Prostate gland (tissue), 2 donors: ENCODE measurements at regions of chr18 and their contacts with region 1.

Region 1: GRCh38 chr18:7566567-7567473 is at the start of gene PTPRM:
- DNase-seq: peak; percentile 80
- H3K4me3 ChIP-seq: peak within 1 kb of the TSS; percentile 79 to 82
- H3K27ac ChIP-seq: peak within 1 kb of the TSS; percentile 90 to 97
- H3K4me1 ChIP-seq: no peaks in the 10 kb centered on the region
- H3K27me3 ChIP-seq: no peaks in the 10 kb centered on the region
- CTCF ChIP-seq: peak; percentile 10 to 94 (median 64)
- POLR2A ChIP-seq: peak; percentile 54
- total RNA-seq, gene PTPRM: 32.9 to 92.6 TPM

Region 2: DNA sequence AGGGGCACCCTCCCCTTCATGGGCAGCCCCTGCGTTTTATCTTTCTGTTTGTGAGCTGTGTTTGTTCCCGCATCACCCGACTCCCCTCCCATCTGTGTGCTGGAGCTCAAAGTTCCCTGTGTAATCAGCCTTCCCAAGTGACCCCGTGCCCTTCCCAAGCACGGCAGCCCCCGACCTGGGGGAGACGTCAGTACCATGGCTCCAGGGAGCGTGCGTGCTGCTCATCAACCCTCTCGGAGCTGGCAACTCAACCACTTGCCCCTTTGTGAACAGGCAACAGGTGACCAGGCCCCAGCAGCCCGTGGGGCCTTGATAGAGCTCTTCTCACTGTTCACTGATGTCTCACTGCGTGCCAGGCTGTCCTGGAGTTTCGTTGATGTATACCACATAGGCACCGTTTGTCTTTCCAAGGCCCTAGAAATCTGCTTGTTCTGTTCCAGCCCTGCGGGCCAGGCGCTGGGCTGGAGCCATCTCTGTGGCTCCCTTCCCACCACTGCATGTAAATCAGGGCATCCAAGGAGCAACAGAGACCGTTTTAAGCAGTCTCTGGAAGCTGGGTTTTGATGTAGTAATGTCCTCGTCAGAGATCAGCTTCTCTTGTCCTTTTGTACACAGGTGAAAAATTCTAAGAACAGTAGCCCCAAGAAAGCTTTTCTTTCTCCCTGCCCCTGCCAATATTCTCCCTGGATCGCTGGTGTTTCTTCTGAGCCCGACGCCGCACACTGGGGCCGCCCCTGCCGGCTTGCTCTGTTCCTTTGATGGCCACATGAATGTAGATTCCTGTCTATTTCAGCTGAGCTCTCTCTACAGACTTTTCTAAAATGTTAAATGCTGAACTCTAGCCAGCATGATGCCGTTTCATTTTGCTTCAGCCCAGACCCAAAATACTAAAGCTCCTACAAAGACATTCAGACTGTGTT is 106.7 kb before region 1 on chr18:
- intact Hi-C with region 1: loop called (anchors 2 kb)
- DNase-seq: no peak
- H3K4me3 ChIP-seq: no peak overlapping the region
- H3K27ac ChIP-seq: peak overlapping the region; percentile 42 to 71
- H3K4me1 ChIP-seq: no peaks in the 10 kb centered on the region
- H3K27me3 ChIP-seq: no peaks in the 10 kb centered on the region
- CTCF ChIP-seq: no peak
- POLR2A ChIP-seq: no peak

Region 3: GRCh38 chr18:7755753-7756475 is 189.1 kb after region 1 on chr18:
- intact Hi-C with region 1: loop called (anchors 2 kb)
- DNase-seq: no peak
- H3K4me3 ChIP-seq: no peak overlapping the region
- H3K27ac ChIP-seq: peak overlapping the region in 1 of 2 donors; percentile 49
- H3K4me1 ChIP-seq: peaks cover 7% of the 10 kb centered on the region
- H3K27me3 ChIP-seq: no peaks in the 10 kb centered on the region
- CTCF ChIP-seq: peak in 3 of 4 experiments; percentile 8 to 53 (median 46)
- POLR2A ChIP-seq: no peak

Region 4: GRCh38 chr18:8389391-8390340 is 822.8 kb after region 1 on chr18:
- intact Hi-C with region 1: loop called (anchors 10 kb)
- DNase-seq: peak; percentile 69
- H3K4me3 ChIP-seq: no peak overlapping the region
- H3K27ac ChIP-seq: no peak overlapping the region
- H3K4me1 ChIP-seq: no peaks in the 10 kb centered on the region
- H3K27me3 ChIP-seq: no peaks in the 10 kb centered on the region
- CTCF ChIP-seq: peak in 3 of 4 experiments; percentile 77 to 81 (median 80)
- POLR2A ChIP-seq: no peak

Region 5: DNA sequence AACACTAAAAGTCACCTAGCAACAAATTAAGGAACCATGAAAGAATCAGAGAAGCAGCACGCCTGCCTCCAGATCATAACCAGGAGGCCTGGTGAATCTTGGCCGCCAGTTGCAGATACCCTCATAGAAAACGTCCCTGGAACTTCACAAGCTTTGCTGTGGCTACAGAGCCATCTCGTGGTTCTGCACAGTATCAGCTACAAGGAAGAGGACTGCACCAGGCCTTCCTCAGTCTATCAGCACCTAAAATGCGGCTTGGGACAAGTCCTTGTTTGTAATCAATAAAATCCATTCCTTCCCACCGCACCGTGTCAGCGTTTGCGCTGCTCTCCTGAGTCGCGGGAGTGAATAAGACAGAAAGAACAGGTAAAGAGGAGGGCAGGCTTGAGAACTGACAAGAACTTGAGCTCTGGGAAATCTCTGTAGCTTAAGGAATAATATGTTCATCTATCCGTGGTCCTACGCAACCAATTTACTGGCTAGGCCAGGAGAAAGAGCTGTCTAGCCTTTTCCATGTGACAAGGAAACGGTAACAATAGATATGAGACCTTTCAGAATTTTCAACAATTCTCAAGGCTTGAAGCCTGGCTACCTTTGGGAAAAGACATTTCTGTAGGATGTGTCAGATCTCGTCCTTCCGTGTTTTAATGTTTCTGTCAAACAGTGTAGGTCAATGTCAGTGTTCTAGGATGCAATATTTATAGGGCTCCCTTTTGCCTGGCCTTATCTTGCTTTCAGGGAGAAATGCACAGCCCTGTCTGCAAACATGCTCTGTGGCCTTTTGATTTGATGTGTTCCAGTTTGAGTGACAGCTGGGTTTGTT is 913.9 kb after region 1 on chr18:
- intact Hi-C with region 1: loop called (anchors 5 kb)
- DNase-seq: peak; percentile 48
- H3K4me3 ChIP-seq: no peak overlapping the region
- H3K27ac ChIP-seq: no peak overlapping the region
- H3K4me1 ChIP-seq: no peaks in the 10 kb centered on the region
- H3K27me3 ChIP-seq: no peaks in the 10 kb centered on the region
- CTCF ChIP-seq: peak in 3 of 4 experiments; percentile 43 to 59 (median 55)
- POLR2A ChIP-seq: no peak